Ovary (tissue), 10 donors: ENCODE measurements at regions of chrX and their contacts with region 1.

Region 1: GRCh38 chrX:84893897-84894296 is 109.8 kb upstream of the APOOL start:
- DNase-seq: no peak
- H3K4me3 ChIP-seq: no peak overlapping the region
- H3K27ac ChIP-seq: no peak overlapping the region
- H3K4me1 ChIP-seq: no peaks in the 10 kb centered on the region
- H3K27me3 ChIP-seq: no peaks in the 10 kb centered on the region
- CTCF ChIP-seq: no peak
- EP300 ChIP-seq: no peak
- POLR2A ChIP-seq: no peak

Region 2: GRCh38 chrX:84475596-84475995 is 418.3 kb before region 1 on chrX:
- intact Hi-C with region 1: loop called in 1 of 4 experiments (anchors 10 kb)
- DNase-seq: no peak
- H3K4me3 ChIP-seq: no peak overlapping the region
- H3K27ac ChIP-seq: no peak overlapping the region
- H3K4me1 ChIP-seq: no peaks in the 10 kb centered on the region
- H3K27me3 ChIP-seq: no peaks in the 10 kb centered on the region
- CTCF ChIP-seq: no peak
- EP300 ChIP-seq: no peak
- POLR2A ChIP-seq: no peak

Region 3: DNA sequence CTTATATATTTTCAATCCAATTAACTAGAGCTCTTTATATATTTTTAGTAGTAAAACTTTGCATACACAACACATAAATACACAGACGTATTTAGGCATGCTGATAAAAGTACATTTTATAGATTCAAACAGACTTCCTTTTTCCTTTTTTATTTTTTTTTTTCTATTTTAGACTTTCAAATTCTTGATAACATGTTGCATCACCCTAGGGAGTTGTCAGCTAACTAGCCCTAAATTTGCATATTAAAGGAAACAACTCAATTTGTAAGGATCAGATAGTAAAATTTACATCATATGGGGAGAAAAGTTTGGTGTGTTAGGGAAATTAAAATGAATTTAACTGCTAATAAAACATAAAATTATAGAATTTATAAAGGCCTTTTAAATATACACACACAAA is 62.4 kb after region 1 on chrX:
- intact Hi-C with region 1: no loop called
- DNase-seq: no peak
- H3K4me3 ChIP-seq: no peak overlapping the region
- H3K27ac ChIP-seq: no peak overlapping the region
- H3K4me1 ChIP-seq: no peaks in the 10 kb centered on the region
- H3K27me3 ChIP-seq: no peaks in the 10 kb centered on the region
- CTCF ChIP-seq: no peak
- EP300 ChIP-seq: no peak
- POLR2A ChIP-seq: no peak